Calu3 (cell line): ENCODE measurements at regions of chr15 and their contacts with region 1.

Region 1: GRCh38 chr15:53022788-53023187 is 232.7 kb upstream of the ONECUT1 start:
- DNase-seq: no peak
- H3K4me3 Mint-ChIP-seq: no peak overlapping the region
- H3K27ac Mint-ChIP-seq: no peak overlapping the region
- H3K4me1 Mint-ChIP-seq: no peaks in the 10 kb centered on the region
- H3K27me3 Mint-ChIP-seq: no peaks in the 10 kb centered on the region
- CTCF ChIP-seq: no peak

Region 2: DNA sequence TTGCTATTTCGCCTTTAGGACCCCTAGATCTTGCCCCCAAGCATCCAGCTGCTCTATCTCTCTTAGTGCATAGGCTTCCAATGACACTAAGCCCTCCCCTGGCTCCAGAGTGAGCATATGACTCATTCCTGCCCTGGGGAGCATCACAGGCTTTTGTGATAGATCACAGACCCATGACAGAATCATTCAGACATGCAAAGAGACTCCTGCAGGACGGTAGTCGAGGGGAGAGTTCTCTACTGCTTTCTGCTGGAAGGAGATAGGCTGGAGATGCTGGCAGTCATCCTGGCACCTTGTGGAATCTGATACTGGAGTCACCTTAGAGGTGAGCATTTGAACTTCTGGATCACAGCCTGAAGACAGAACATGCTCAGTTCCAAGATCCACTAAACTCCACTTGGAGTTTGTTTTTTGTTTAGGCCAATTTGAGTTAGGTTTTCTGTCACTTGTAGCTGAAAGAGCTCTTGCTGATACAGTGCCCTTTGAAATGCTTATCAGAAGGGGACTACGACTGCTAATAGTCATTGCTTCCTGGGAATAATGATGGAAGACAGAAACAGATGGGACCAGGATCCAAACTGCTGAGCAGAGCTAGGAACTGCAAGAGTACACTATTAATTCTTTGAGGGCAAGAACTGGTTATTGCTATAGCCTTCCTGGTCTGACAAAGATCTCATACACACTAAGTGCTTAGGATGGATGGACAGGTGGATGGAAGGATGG is 1296.3 kb before region 1 on chr15:
- CTCF ChIA-PET with region 1: no interaction called
- intact Hi-C with region 1: no loop called
- DNase-seq: peak; percentile 19
- H3K4me3 Mint-ChIP-seq: no peak overlapping the region
- H3K27ac Mint-ChIP-seq: no peak overlapping the region
- H3K4me1 Mint-ChIP-seq: peaks cover 21% of the 10 kb centered on the region
- H3K27me3 Mint-ChIP-seq: no peaks in the 10 kb centered on the region
- CTCF ChIP-seq: no peak

Region 3: GRCh38 chr15:53046153-53046790 is 23.5 kb after region 1 on chr15:
- CTCF ChIA-PET with region 1: no interaction called
- intact Hi-C with region 1: loop called (anchors 1 kb)
- DNase-seq: no peak
- H3K4me3 Mint-ChIP-seq: no peak overlapping the region
- H3K27ac Mint-ChIP-seq: no peak overlapping the region
- H3K4me1 Mint-ChIP-seq: no peaks in the 10 kb centered on the region
- H3K27me3 Mint-ChIP-seq: no peaks in the 10 kb centered on the region
- CTCF ChIP-seq: no peak

Region 4: DNA sequence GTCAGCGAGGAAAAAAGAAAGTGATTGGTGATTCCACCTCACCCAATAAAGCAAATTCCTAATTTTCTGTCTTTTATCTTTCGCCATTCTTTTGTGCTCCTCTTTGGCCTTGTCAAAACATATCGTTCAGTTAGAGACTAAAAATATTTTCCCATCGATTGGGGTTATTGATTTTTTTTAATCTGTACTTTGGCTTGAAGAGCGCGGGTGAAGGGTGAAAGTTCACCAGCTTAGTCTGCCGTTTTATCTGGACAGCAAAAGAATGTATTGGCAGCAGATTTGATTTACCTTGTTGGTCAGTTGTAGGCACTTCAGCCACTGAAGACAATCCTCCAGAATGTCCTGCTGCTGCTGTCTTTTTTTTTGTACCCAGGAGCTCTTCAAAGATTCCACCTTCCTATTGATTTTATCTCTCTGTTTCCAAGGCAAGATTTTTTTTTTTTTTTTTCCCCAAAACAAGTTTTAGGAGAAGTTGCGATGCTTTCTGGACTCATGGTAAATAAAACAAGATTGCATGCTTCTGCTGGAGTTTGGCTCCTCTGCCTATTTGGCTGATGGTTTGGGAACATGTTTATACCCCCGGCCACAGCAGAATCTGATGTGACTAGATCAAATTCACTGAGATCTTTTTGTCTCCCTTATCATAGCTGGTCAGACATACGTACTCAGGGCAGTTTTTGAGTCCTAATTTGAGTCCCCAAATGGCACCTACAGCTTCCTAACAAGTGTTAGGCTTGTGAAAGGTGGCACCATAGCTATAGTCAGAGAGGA is 36.7 kb after region 1 on chr15:
- CTCF ChIA-PET with region 1: no interaction called
- intact Hi-C with region 1: no loop called
- DNase-seq: no peak
- H3K4me3 Mint-ChIP-seq: no peak overlapping the region
- H3K27ac Mint-ChIP-seq: no peak overlapping the region
- H3K4me1 Mint-ChIP-seq: no peaks in the 10 kb centered on the region
- H3K27me3 Mint-ChIP-seq: no peaks in the 10 kb centered on the region
- CTCF ChIP-seq: no peak